GM12878 (cell line): ENCODE measurements at regions of chrX and their contacts with region 1.

Region 1: DNA sequence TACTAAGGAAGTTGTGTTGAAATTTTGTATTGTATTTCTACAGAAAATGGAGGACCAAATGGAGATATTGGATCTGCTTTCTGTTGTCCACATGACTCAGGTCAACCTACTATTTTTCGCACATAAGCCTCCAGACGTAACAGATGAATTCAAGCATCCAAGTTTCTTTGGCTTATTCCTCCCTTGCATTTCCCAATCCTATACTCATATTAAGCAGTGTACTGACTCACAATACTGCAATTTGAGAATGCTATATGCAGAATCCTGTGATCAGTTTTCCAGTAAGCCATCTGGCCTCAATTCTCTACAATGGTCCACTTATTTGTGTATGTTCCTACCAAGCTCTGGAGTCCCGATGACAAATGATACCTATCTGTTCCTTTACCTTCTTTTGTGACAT is 75.7 kb downstream of the ASB9 start:
- DNase-seq: no peak
- ATAC-seq: no peak
- H3K4me3 ChIP-seq: no peak overlapping the region
- H3K27ac ChIP-seq: no peak overlapping the region
- H3K4me1 ChIP-seq: no peaks in the 10 kb centered on the region
- H3K27me3 ChIP-seq: no peaks in the 10 kb centered on the region
- CTCF ChIP-seq: no peak
- EP300 ChIP-seq: no peak
- POLR2A ChIP-seq: no peak
- RAD21 ChIP-seq: no peak

Region 2: GRCh38 chrX:15158736-15159406 is 35.3 kb before region 1 on chrX:
- CTCF ChIA-PET with region 1: no interaction called
- POLR2A ChIA-PET with region 1: interaction called, 3 read pairs
- RAD21 ChIA-PET with region 1: interaction called, 19 read pairs
- SMC1A ChIA-PET with region 1: interaction called, 11 read pairs
- in situ Hi-C with region 1: no loop called
- intact Hi-C with region 1: no loop called
- DNase-seq: peak; percentile 33
- ATAC-seq: peak; percentile 75
- H3K4me3 ChIP-seq: peak overlapping the region; percentile 29
- H3K27ac ChIP-seq: peak overlapping the region; percentile 48; the same call in 1 of the 2 replicates
- H3K4me1 ChIP-seq: no peaks in the 10 kb centered on the region
- H3K27me3 ChIP-seq: no peaks in the 10 kb centered on the region
- CTCF ChIP-seq: no peak
- EP300 ChIP-seq: 0 out of 4 replicates have a peak, but pooled peaks of 1 of the 2 experiments have one; percentile 11
- POLR2A ChIP-seq: no peak
- RAD21 ChIP-seq: no peak

Region 3: GRCh38 chrX:15335135-15336022 is 141.2 kb after region 1 on chrX and contains the start of gene PIGA:
- CTCF ChIA-PET with region 1: no interaction called
- POLR2A ChIA-PET with region 1: no interaction called
- RAD21 ChIA-PET with region 1: no interaction called
- SMC1A ChIA-PET with region 1: no interaction called
- in situ Hi-C with region 1: no loop called
- intact Hi-C with region 1: no loop called
- DNase-seq: peak; percentile 82
- ATAC-seq: peak; percentile 98
- H3K4me3 ChIP-seq: peak within 1 kb of the TSS; percentile 76
- H3K27ac ChIP-seq: peak within 1 kb of the TSS; percentile 60
- H3K4me1 ChIP-seq: no peaks in the 10 kb centered on the region
- H3K27me3 ChIP-seq: no peaks in the 10 kb centered on the region
- CTCF ChIP-seq: no peak
- EP300 ChIP-seq: no peak
- POLR2A ChIP-seq: peak; percentile 88
- RAD21 ChIP-seq: no peak
- polyA plus RNA-seq, gene PIGA: 4.9 to 6.8 TPM